ENCODE measurements at regions of chr12 and their contacts with region 1.

Region 1: GRCh38 chr12:122336015-122336946 is 70.0 kb upstream of the VPS33A start:
- DNase-seq: peak; percentile 63
- ATAC-seq: peak; percentile 58
- H3K4me3 Mint-ChIP-seq: no peak overlapping the region
- H3K27ac Mint-ChIP-seq: peak overlapping the region; percentile 71
- H3K4me1 Mint-ChIP-seq: peaks cover 13% of the 10 kb centered on the region
- H3K27me3 Mint-ChIP-seq: no peaks in the 10 kb centered on the region

Region 2: DNA sequence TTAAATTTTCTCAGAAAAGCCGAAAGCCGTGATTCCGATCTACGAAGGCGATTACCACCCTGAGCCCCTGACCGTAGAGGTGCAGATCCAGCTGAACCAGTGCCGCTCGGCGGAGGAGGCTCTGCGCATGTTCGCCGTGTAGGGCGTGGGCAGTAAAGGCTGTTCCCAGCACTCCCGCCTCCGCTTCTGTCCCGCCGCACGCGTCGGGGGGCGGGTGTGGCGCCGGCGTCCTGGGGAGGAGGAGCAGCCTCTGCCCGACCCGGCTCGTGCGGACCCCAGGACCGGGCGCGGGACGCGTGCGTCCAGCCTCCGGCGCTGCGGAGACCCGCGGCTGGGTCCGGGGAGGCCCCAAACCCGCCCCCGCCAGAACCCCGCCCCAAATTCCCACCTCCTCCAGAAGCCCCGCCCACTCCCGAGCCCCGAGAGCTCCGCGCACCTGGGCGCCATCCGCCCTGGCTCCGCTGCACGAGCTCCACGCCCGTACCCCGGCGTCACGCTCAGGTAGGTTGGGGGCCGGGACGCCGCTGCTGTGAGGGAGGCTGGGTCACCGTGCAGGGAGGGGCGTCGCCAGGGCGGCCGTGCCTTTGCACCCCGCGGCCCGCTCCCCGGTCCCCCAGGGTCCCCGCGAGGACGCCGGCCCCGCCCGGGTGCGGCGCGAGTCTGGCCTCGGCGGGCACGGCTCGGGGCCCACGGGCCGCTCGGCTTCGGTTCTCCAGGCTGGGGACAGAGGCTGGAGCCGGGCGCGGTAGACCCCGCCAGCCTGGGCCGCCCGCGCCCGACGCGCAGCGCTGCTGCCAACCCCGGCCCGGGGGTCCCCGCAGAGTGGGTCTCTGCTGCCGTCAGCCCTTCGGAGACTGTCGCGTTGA is 132.7 kb before region 1 on chr12 and contains the start of gene B3GNT4:
- CTCF ChIA-PET with region 1: no interaction called
- POLR2A ChIA-PET with region 1: no interaction called
- DNase-seq: peak; percentile 70
- ATAC-seq: peak; percentile 78
- H3K4me3 Mint-ChIP-seq: peak within 1 kb of the TSS; percentile 77
- H3K27ac Mint-ChIP-seq: peak within 1 kb of the TSS; percentile 52
- H3K4me1 Mint-ChIP-seq: peaks cover 15% of the 10 kb centered on the region
- H3K27me3 Mint-ChIP-seq: peaks cover 25% of the 10 kb centered on the region
- total RNA-seq, gene B3GNT4: 0.90 to 1.4 TPM

Region 3: DNA sequence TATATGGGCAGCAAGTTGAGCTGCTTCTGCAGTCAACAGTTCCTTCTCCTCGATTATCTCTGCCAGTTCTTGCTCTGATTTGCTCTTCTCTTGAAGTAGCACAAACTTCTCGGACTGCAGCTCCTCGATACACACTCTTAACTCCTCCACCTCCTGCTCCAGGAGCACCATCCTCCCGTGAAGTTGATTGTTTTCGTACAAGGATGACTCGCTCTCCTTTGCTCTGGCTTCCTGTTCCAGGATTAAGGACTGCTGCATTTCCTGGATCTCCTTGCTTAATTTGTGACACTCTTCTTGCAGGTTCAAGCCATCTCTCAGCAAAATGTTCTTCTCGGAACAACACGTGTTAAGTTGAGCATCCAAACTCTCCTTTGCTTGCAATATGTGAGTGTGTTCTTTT is 13.8 kb before region 1 on chr12:
- CTCF ChIA-PET with region 1: interaction called, 15 read pairs
- POLR2A ChIA-PET with region 1: no interaction called
- DNase-seq: no peak
- ATAC-seq: no peak
- H3K4me3 Mint-ChIP-seq: no peak overlapping the region
- H3K27ac Mint-ChIP-seq: no peak overlapping the region
- H3K4me1 Mint-ChIP-seq: peaks cover 16% of the 10 kb centered on the region
- H3K27me3 Mint-ChIP-seq: no peaks in the 10 kb centered on the region

Region 4: GRCh38 chr12:122349078-122349477 is 12.8 kb after region 1 on chr12:
- CTCF ChIA-PET with region 1: interaction called, 44 read pairs
- POLR2A ChIA-PET with region 1: no interaction called
- DNase-seq: no peak
- ATAC-seq: no peak
- H3K4me3 Mint-ChIP-seq: no peak overlapping the region
- H3K27ac Mint-ChIP-seq: no peak overlapping the region
- H3K4me1 Mint-ChIP-seq: peaks cover 11% of the 10 kb centered on the region
- H3K27me3 Mint-ChIP-seq: no peaks in the 10 kb centered on the region